ENCODE measurements at regions of chr17 and their contacts with region 1.

Region 1: GRCh38 chr17:75904749-75905521 is at the start of gene MRPL38:
- DNase-seq: peak; percentile 92 to 95
- H3K4me3 ChIP-seq: peak within 1 kb of the TSS; percentile 96
- H3K4me1 ChIP-seq: peaks cover 7% of the 10 kb centered on the region
- H3K27me3 ChIP-seq: no peaks in the 10 kb centered on the region

Region 2: GRCh38 chr17:76005263-76006149 is 100.6 kb after region 1 on chr17:
- in situ Hi-C with region 1: loop called (anchors 5 kb)
- DNase-seq: peak; percentile 34 to 95
- H3K4me3 ChIP-seq: no peak overlapping the region
- H3K4me1 ChIP-seq: no peaks in the 10 kb centered on the region
- H3K27me3 ChIP-seq: no peaks in the 10 kb centered on the region

Region 3: DNA sequence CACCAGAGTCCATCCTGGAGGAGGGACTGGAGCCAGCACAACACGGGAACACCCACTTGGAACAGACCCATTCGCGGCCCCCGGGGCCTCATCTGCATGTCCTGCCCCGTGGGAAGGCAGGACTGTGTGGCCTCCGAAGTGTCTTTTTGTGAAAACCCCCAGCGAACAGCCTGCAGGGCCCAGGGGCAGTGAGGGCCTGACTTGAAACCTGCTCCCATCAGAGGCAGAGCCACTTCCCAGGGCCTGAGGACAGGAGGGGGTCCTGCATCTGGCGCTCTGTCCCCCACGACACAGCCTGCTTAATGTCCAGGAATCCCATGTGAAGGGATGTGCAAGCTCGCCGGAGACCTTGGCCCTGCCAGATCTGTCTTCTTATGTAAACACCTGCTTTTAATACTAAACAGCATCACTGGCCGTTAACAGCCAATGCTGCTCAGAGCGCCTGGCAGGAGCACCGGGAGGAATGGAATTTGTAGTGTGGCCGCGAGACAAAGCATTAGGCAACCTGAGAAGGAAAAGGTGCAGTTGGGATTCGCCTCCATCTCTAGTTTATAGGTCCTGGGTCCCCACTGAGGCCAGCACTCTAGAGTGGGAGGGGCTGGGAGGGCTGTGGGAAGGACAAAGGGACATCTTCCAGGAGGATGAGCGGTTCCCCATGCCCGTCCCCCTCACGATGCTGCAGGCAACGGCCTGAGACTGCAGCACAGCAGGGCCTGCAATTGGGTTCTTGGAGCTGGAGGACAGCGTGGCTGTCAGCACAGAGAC is 131.7 kb after region 1 on chr17:
- in situ Hi-C with region 1: no loop called
- DNase-seq: no peak
- H3K4me3 ChIP-seq: no peak overlapping the region
- H3K4me1 ChIP-seq: no peaks in the 10 kb centered on the region
- H3K27me3 ChIP-seq: no peaks in the 10 kb centered on the region

Region 4: GRCh38 chr17:76278952-76279741 is 374.2 kb after region 1 on chr17:
- in situ Hi-C with region 1: loop called (anchors 25 kb)
- DNase-seq: peak; percentile 66 to 92
- H3K4me3 ChIP-seq: no peak overlapping the region
- H3K4me1 ChIP-seq: no peaks in the 10 kb centered on the region
- H3K27me3 ChIP-seq: no peaks in the 10 kb centered on the region

Measured in HAP-1 (cell line).